GM23248 (cell line): ENCODE measurements at regions of chr19 and their contacts with region 1.

Region 1: GRCh38 chr19:30682999-30683536 is 310.9 kb downstream of the ZNF536 start:
- DNase-seq: peak; percentile 94
- H3K4me3 ChIP-seq: no peak overlapping the region
- H3K27ac ChIP-seq: no peak overlapping the region
- H3K4me1 ChIP-seq: no peaks in the 10 kb centered on the region
- H3K27me3 ChIP-seq: peaks cover 26% of the 10 kb centered on the region

Region 2: DNA sequence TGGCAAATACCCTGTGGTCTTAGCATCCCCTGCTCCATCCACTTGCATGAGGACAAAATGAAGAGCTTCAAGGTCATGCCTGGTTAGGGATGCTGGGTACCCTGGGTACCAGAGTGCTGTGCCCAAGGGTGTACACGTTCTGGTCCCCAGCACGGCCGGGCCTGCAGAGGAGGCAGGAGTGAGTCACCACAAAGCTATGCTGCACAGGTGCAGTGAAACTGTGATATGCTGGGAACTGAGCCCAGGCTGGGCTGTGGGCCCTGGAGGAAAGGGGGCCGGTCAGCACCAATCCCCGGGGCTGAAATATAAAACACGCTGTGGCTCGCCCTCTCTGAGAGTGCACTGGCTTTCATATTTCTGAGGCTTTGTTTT is 571.1 kb after region 1 on chr19:
- in situ Hi-C with region 1: no loop called
- DNase-seq: no peak
- H3K4me3 ChIP-seq: no peak overlapping the region
- H3K27ac ChIP-seq: no peak overlapping the region
- H3K4me1 ChIP-seq: no peaks in the 10 kb centered on the region
- H3K27me3 ChIP-seq: no peaks in the 10 kb centered on the region

Region 3: DNA sequence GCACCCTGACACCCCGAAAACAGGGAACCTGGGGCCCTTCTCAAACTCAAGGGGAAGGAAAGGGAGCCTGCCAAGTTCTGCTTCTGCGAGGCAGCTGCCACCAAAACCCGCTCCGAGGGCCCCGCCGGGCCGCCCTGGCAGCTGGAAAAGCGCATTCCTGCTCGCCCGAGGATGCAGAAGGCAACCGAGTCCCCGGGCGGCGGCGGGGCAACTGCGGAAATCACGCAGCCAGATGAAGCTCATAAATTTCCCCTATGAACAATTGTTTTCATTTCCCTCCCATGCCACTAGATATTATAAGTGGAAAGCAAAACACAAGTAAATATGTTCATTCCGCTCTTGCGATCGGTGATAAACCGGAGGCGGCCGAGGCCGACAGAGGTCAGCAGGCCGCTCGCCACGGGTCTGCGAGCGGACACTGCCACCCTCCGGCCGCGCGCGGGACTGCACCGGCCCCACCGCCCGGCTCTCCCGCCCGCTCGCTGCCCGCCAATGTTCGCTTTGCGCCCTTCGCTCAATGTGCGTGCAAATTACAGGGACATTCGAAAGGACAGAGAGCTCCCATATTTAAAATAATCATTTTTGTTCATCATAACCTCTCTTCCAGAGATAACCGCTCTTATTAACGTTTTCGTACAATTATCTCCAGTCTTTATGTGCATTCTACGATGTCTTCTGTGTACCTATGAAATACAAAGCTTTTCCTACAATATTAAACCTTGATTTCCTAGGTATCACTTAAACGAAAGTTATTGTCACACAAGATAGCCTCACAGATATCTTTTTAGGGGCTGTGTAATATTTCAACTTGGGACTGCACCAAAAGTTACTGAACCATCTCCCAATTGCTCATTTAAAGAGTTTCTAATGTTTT is 1541.5 kb after region 1 on chr19:
- in situ Hi-C with region 1: loop called (anchors 25 kb)
- DNase-seq: peak; percentile 71
- H3K4me3 ChIP-seq: peak overlapping the region; percentile 57
- H3K27ac ChIP-seq: no peak overlapping the region
- H3K4me1 ChIP-seq: no peaks in the 10 kb centered on the region
- H3K27me3 ChIP-seq: peaks cover 7% of the 10 kb centered on the region